Lower lobe of right lung (tissue), 2 donors: ENCODE measurements at regions of chr20 and their contacts with region 1.

Region 1: GRCh38 chr20:20824924-20825584 is 112.6 kb upstream of the RALGAPA2 start:
- DNase-seq: peak; percentile 68
- ATAC-seq: peak; percentile 80 to 85
- H3K4me3 ChIP-seq: no peak overlapping the region
- H3K27ac ChIP-seq: no peak overlapping the region
- H3K4me1 ChIP-seq: peaks cover 4% of the 10 kb centered on the region
- H3K27me3 ChIP-seq: no peaks in the 10 kb centered on the region
- CTCF ChIP-seq: peak; percentile 79

Region 2: GRCh38 chr20:20664795-20665589 is 160.1 kb before region 1 on chr20:
- intact Hi-C with region 1: loop called (anchors 10 kb)
- DNase-seq: no peak
- ATAC-seq: peak; percentile 76 to 84
- H3K4me3 ChIP-seq: no peak overlapping the region
- H3K27ac ChIP-seq: no peak overlapping the region
- H3K4me1 ChIP-seq: peaks cover 40% of the 10 kb centered on the region
- H3K27me3 ChIP-seq: no peaks in the 10 kb centered on the region
- CTCF ChIP-seq: peak; percentile 60